ENCODE measurements at regions of chr1 and their contacts with region 1.

Region 1: DNA sequence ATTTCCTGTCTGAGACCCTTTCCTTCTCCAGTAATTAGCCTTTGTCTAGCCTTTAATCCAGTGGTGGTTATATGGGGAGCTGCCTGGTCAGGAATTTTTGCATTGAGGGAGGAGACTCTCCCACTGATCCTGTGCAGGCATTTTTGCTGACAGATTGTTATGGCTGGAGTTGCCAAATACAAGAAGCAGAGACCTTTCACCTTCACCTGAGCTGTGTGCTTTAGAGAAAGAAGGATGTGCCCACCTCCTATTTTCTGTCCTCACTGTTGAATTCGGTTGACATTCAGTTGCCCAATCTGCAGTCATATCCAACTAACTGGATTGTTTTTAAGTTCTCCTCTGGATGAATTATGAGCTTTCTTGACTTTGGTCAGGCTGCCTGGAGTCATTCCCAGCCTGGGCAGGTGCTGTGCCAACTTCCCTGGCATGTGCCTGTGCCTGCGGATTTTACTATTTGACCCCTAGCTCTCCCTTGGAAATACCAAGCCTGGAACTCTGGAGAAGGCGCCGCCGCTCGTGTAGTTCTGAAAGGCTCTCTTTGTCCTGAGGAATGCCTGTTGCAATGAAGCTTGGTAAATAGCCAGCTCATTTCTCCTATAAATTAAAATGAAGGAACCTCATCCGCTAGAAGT is 143.9 kb downstream of the NOS1AP start:
- DNase-seq: peak; percentile 67 to 92
- H3K4me3 ChIP-seq: no peak overlapping the region
- H3K27ac ChIP-seq: peak overlapping the region; percentile 34 to 44
- H3K4me1 ChIP-seq: peaks cover 0 to 46% (median 33%) of the 10 kb centered on the region in 4 donors
- H3K27me3 ChIP-seq: peaks cover 0 to 13% of the 10 kb centered on the region in 2 donors
- CTCF ChIP-seq: no peak

Region 2: DNA sequence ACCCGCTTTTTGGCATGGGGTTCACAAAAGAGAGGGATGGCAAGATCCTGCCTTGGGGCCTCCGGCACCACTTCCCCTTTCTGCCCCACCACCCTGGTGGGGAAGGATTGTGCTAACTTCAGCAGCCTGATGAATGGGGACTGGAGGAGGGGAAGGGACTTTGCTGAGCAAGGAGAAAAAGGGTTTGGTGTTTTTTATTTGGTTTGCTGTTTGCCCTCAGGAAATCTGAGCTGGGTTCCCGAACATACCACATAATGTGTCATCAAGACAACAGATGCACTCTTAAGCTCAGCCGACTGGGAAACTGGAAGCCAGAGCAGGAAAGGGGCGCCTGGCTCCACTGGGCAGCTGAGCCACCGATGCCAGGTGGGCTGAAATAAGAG is 209.6 kb before region 1 on chr1:
- intact Hi-C with region 1: no loop called
- DNase-seq: peak; percentile 55 to 78
- H3K4me3 ChIP-seq: peak overlapping the region; percentile 16 to 25
- H3K27ac ChIP-seq: peak overlapping the region; percentile 62 to 71
- H3K4me1 ChIP-seq: peaks cover 0 to 42% (median 27%) of the 10 kb centered on the region in 4 donors
- H3K27me3 ChIP-seq: no peaks in the 10 kb centered on the region
- CTCF ChIP-seq: no peak

Region 3: DNA sequence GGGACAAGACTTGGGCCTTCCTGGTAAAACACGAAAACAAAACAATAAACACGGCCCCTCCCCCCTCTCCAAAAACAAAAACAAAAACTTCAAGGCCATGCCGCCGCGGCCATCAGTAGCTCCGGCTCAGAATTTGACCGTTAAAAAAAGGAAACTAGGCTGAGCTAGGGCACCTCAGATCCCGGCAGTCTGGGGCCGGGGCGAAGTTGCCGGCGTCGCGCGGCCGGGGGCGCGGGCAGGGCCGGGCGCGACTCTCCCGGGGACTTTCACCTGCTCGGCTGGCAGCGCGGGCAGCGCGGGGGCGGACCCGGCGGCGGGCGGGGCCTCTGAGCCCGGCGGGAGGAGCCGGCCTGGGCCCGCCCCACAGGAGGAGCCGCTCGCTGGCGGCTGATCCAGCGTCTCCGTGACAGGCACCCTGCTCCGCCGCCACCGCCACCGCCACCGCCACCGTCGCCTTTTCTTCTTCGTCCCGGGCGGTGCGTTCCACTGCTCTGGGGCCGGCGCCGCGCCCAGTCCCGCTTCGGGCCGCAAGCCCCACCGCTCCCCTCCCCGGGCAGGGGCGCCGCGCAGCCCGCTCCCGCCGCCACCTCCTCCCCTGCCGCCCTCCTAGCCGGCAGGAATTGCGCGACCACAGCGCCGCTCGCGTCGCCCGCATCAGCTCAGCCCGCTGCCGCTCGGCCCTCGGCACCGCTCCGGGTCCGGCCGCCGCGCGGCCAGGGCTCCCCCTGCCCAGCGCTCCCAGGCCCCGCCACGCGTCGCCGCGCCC is 143.9 kb before region 1 on chr1 and contains the start of gene NOS1AP:
- intact Hi-C with region 1: loop called (anchors 10 kb)
- DNase-seq: peak; percentile 57 to 85
- H3K4me3 ChIP-seq: peak within 1 kb of the TSS; percentile 56 to 75
- H3K27ac ChIP-seq: peak within 1 kb of the TSS in 1 of 2 donors; percentile 18
- H3K4me1 ChIP-seq: peaks cover 0 to 27% (median 15%) of the 10 kb centered on the region in 4 donors
- H3K27me3 ChIP-seq: peaks cover 0 to 39% of the 10 kb centered on the region in 2 donors
- CTCF ChIP-seq: no peak

Region 4: DNA sequence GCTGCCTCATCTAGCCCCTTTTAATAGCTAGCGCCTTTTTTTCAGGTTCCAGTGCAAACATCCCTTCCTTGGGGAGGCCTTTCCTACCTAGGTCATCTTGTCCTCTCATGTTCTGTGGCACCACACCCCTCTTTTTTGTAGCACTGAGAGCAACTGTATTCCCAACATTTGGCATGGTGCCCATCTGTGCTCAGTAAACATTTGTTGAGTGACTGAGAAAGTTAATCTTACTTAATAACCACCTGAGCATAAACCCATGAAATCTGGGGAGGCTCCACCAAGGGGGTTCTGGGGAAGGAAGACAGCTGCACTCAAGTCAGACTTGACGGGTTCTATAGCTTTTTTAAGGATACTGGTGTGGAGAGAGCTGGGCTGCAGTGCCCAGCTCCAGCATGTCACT is 53.9 kb before region 1 on chr1:
- intact Hi-C with region 1: no loop called
- DNase-seq: no peak
- H3K4me3 ChIP-seq: no peak overlapping the region
- H3K27ac ChIP-seq: no peak overlapping the region
- H3K4me1 ChIP-seq: peaks cover 0 to 5% (median 2%) of the 10 kb centered on the region in 4 donors
- H3K27me3 ChIP-seq: no peaks in the 10 kb centered on the region
- CTCF ChIP-seq: no peak

Region 5: GRCh38 chr1:162463021-162463420 is 249.6 kb after region 1 on chr1:
- intact Hi-C with region 1: no loop called
- DNase-seq: no peak
- H3K4me3 ChIP-seq: no peak overlapping the region
- H3K27ac ChIP-seq: no peak overlapping the region
- H3K4me1 ChIP-seq: no peaks in the 10 kb centered on the region
- H3K27me3 ChIP-seq: no peaks in the 10 kb centered on the region
- CTCF ChIP-seq: no peak